GM12878 (cell line): ENCODE measurements at regions of chr11 and their contacts with region 1.

Region 1: GRCh38 chr11:102390667-102391465 is 43.9 kb downstream of the BIRC2 start:
- DNase-seq: no peak
- ATAC-seq: peak; percentile 93
- H3K4me3 ChIP-seq: no peak overlapping the region
- H3K27ac ChIP-seq: no peak overlapping the region
- H3K4me1 ChIP-seq: no peaks in the 10 kb centered on the region; the same call in 1 of the 2 replicates
- H3K27me3 ChIP-seq: no peaks in the 10 kb centered on the region
- CTCF ChIP-seq: peak; percentile 82 to 91 (median 89)
- EP300 ChIP-seq: no peak
- POLR2A ChIP-seq: no peak
- RAD21 ChIP-seq: peak; percentile 76

Region 2: DNA sequence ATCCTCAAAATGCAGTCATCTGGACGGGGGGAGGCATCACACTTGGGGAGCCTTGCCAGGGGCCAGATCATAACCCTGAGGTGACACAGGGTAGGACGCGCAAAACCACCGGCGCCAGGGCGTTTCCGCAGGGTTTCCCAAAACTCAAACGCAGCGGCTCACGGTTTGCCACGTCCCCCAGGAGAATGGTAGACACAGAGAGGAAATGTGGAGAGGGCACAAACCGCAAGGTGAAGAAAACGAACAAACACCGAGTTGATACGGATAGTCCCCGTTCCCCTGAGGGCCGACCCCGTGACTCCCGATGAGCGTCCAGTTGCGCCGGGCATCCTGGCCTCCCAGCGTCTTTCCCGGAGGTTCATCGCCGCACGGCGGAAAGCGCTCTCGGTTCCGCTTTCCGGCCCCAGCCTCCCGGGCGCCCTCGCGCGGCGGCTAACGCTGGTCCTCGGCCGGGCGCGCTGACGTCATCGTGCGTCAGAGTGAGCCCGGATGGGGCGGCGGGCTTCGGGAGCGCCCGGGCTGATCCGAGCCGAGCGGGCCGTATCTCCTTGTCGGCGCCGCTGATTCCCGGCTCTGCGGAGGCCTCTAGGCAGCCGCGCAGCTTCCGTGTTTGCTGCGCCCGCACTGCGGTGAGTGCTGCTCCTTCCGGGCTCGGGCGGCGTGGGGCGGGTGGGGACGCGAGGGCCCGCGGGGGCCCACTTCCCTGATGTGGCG is 44.0 kb before region 1 on chr11 and contains the start of gene BIRC2:
- CTCF ChIA-PET with region 1: interaction called, 64 read pairs
- POLR2A ChIA-PET with region 1: no interaction called
- RAD21 ChIA-PET with region 1: interaction called, 20 read pairs
- SMC1A ChIA-PET with region 1: interaction called, 37 read pairs
- in situ Hi-C with region 1: no loop called
- intact Hi-C with region 1: loop called (anchors 2 kb)
- DNase-seq: peak; percentile 67
- ATAC-seq: peak; percentile 86
- H3K4me3 ChIP-seq: peak within 1 kb of the TSS; percentile 77
- H3K27ac ChIP-seq: peak within 1 kb of the TSS; percentile 96
- H3K4me1 ChIP-seq: no peaks in the 10 kb centered on the region
- H3K27me3 ChIP-seq: no peaks in the 10 kb centered on the region
- CTCF ChIP-seq: peak; percentile 71 to 90 (median 80)
- EP300 ChIP-seq: peak; percentile 65 to 78; a peak in 3 of 4 replicates
- POLR2A ChIP-seq: peak; percentile 92
- RAD21 ChIP-seq: no peak; the same call in 1 of the 2 replicates
- polyA plus RNA-seq, gene BIRC2: 13.8 to 17.8 TPM

Region 3: GRCh38 chr11:102410382-102410784 is 19.5 kb after region 1 on chr11:
- CTCF ChIA-PET with region 1: interaction called, 91 read pairs
- POLR2A ChIA-PET with region 1: interaction called, 4 read pairs
- RAD21 ChIA-PET with region 1: interaction called, 17 read pairs
- SMC1A ChIA-PET with region 1: interaction called, 28 read pairs
- in situ Hi-C with region 1: no loop called
- intact Hi-C with region 1: no loop called
- DNase-seq: no peak
- ATAC-seq: no peak
- H3K4me3 ChIP-seq: no peak overlapping the region
- H3K27ac ChIP-seq: no peak overlapping the region
- H3K4me1 ChIP-seq: no peaks in the 10 kb centered on the region
- H3K27me3 ChIP-seq: no peaks in the 10 kb centered on the region
- CTCF ChIP-seq: no peak
- EP300 ChIP-seq: no peak
- POLR2A ChIP-seq: no peak
- RAD21 ChIP-seq: no peak

Region 4: DNA sequence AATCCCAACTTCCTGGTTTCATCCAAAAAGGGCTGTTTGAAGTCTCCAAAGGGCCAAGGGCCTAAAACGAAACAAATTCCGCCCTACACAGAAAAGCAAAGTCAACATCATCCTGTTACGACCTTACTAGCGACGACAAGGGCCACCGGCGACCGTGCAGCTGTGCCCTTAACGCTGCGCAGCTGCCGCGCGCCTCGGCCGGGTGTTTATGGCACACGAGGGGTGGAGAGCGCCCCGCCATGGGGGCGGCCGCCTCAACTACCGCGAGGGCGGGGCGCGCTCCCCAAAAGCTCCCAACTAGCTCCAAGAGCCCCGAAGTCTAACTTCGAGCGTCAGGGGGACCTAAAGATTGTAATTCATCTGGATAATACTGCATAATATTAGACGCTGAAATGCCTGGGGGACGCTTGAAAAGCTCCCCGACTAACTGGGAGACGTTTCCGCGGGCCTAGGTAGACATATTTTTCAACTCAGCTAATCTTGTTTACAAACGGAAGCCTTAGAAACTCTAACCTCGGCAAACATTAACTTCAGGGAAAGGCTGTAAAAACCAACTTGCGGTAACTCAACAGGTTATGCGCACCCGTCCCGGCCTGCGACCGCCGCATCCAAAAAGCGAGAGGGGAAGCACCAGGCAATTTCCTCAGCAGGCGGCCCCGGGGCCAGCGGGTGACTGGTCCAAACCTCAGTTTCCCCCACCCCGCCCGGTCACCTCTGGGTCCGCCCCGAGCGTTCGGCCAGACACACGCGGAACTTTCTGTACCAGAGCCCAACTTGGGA is 61.0 kb after region 1 on chr11:
- CTCF ChIA-PET with region 1: interaction called, 95 read pairs
- POLR2A ChIA-PET with region 1: interaction called, 3 read pairs
- RAD21 ChIA-PET with region 1: interaction called, 45 read pairs
- SMC1A ChIA-PET with region 1: interaction called, 30 read pairs
- in situ Hi-C with region 1: no loop called
- intact Hi-C with region 1: loop called (anchors 2 kb)
- DNase-seq: no peak
- ATAC-seq: peak; percentile 75
- H3K4me3 ChIP-seq: peak overlapping the region; percentile 75
- H3K27ac ChIP-seq: peak overlapping the region; percentile 79
- H3K4me1 ChIP-seq: peaks cover 17% of the 10 kb centered on the region; the same call in 1 of the 2 replicates
- H3K27me3 ChIP-seq: no peaks in the 10 kb centered on the region
- CTCF ChIP-seq: peak; percentile 27 to 44 (median 35); a peak in 3 of 6 replicates
- EP300 ChIP-seq: no peak
- POLR2A ChIP-seq: peak; percentile 84
- RAD21 ChIP-seq: peak; percentile 20; the same call in 1 of the 2 replicates

Region 5: DNA sequence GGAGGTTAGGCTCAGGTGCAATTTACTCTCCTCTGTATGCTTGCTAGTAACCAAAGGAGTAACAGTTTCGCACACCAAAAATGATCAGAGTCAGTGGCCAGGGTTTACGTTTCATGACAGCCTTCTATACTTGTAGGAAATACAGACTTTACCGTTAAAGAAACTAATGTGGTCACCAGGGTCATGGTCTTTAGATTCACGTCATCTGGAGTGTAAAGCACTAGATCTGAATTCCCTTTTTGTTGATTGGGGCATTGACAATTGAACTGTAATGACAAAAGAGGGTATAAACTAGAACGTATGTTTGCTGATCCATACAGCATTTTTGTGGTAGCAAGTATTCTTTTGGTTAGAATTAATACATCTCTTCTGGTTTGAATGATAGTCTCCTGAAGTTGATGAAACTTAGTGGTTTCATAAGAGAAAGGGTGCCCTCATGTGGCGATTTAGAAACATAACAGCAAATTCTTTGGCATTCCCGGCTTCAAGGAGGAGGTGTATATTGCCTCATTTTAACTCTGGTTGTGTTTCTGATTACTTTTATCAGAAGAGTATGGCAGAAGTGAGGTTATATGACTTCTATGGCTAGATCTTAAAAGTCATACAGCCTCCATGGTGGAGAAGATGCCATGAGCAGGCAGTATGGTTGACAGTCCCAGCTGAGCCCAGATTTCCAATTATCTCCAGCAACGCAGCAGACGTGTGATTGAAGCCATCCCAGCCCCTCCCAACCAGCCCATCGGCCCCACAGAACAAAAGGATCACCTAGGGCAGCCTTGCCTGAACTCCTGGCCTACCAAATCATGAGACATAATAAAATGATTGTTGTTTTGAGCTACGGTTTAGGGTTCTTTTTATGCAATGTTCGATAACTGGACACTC is 104.5 kb after region 1 on chr11:
- CTCF ChIA-PET with region 1: interaction called, 66 read pairs
- POLR2A ChIA-PET with region 1: interaction called, 8 read pairs
- RAD21 ChIA-PET with region 1: interaction called, 42 read pairs
- SMC1A ChIA-PET with region 1: interaction called, 56 read pairs
- in situ Hi-C with region 1: loop called (anchors 25 kb)
- intact Hi-C with region 1: loop called (anchors 1 kb)
- DNase-seq: peak; percentile 79
- ATAC-seq: peak; percentile 97
- H3K4me3 ChIP-seq: peak overlapping the region; percentile 34; the same call in 1 of the 2 replicates
- H3K27ac ChIP-seq: no peak overlapping the region
- H3K4me1 ChIP-seq: peaks cover 14% of the 10 kb centered on the region
- H3K27me3 ChIP-seq: 0 out of 4 replicates have a peak, but pooled peaks cover 0 to 3% of the 10 kb centered on the region in 2 experiments
- CTCF ChIP-seq: peak; percentile 53 to 78 (median 56); a peak in 5 of 6 replicates
- EP300 ChIP-seq: peak; percentile 67 to 68; a peak in 3 of 4 replicates
- POLR2A ChIP-seq: no peak
- RAD21 ChIP-seq: peak; percentile 90